Dorsolateral prefrontal cortex (tissue), 120 donors: ENCODE measurements at regions of chr9 and their contacts with region 1.

Region 1: DNA sequence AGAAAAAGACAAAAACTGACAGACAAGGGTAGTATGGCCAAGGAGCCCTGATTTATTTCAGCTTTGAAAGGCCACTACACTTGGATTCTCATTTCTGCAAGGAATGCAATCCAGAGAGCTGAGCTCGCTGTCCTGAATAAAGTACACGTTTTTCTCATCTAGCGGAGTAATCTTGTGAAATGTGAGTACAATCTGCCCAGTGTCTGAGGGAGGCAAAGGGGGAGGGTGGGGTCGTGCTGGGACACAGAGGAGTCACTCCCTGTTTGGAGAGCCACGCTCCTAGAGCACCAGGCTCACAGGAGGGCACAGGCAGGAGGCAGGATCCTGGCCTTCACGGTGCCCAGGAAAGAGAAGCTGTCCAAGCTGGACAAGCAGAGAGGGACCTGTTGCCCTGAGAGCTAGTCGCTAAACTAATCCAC is 51.0 kb upstream of the IFNK start:
- DNase-seq: peak in 7 of 10 donors; percentile 24 to 56 (median 47)
- H3K4me3 ChIP-seq: peak overlapping the region in 3 of 59 donors; percentile 3 to 11 (median 10)
- H3K27ac ChIP-seq: peak overlapping the region in 49 of 59 donors; percentile 4 to 93 (median 64)
- H3K27me3 ChIP-seq: no peaks in the 10 kb centered on the region
- CTCF ChIP-seq: no peak

Region 2: GRCh38 chr9:27353474-27354229 is 119.5 kb before region 1 on chr9:
- intact Hi-C with region 1: loop called in 1 of 2 experiments (anchors 5 kb)
- DNase-seq: peak; percentile 33 to 96 (median 88)
- H3K4me3 ChIP-seq: peak overlapping the region in 8 of 59 donors; percentile 2 to 27 (median 8)
- H3K27ac ChIP-seq: peak overlapping the region; percentile 37 to 98 (median 91)
- H3K27me3 ChIP-seq: no peaks in the 10 kb centered on the region
- CTCF ChIP-seq: peak in 40 of 56 donors; percentile 6 to 55 (median 32)

Region 3: DNA sequence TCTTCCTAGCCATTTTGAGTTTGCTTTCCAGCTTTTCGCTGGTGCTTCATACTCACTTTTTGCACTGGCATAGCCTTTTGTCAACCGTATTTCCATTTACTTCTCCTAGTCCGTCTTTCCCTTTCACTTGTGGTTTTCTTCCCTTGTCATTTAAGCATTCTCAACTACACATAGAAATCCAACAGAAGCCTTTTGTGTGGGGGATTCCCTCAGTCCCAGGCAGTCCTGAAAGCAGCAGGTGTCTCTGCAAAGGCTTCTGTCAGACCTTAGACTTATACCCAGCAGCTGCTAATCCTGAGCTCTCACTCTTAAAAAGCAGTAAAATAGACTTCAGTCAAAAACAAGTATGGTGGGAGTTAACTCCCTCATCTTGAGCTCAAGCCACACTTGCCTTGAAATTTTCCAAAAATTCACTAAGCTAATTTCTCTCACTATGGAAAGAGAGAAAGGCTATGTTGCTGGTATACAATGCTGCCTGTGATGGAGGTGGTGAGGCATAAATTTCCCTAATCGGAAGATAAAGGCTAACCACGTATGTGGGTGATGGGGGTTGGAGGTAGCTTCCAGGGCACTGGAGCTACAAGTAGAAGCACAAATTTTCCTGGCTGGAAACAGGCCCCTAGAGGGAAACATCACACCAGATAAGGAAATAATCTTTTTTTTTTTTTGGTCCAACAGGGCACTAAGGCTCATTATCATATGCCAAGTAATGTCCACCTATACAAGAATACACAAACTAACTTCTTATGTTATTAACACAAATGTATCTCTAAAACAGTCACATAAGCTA is 16.2 kb after region 1 on chr9:
- intact Hi-C with region 1: no loop called
- DNase-seq: no peak
- H3K4me3 ChIP-seq: peak overlapping the region in 6 of 59 donors; percentile 2 to 9 (median 6)
- H3K27ac ChIP-seq: peak overlapping the region in 53 of 59 donors; percentile 11 to 81 (median 60)
- H3K27me3 ChIP-seq: no peaks in the 10 kb centered on the region
- CTCF ChIP-seq: peak in 16 of 56 donors; percentile 4 to 52 (median 20)